Heart left ventricle (tissue), 16 donors: ENCODE measurements at regions of chr9 and their contacts with region 1.

Region 1: GRCh38 chr9:1100945-1101344 is 50.8 kb downstream of the DMRT2 start:
- DNase-seq: peak in 4 of 5 donors; percentile 13 to 70 (median 37)
- ATAC-seq: peak; percentile 47 to 95 (median 86)
- H3K4me3 ChIP-seq: no peak overlapping the region
- H3K27ac ChIP-seq: no peak overlapping the region
- H3K4me1 ChIP-seq: peaks cover 0 to 6% (median 0%) of the 10 kb centered on the region in 12 donors
- H3K27me3 ChIP-seq: peaks cover 0 to 4% (median 0%) of the 10 kb centered on the region in 9 donors
- CTCF ChIP-seq: peak; percentile 39 to 64 (median 54)
- POLR2A ChIP-seq: no peak

Region 2: GRCh38 chr9:1320607-1321195 is 219.8 kb after region 1 on chr9:
- intact Hi-C with region 1: no loop called
- DNase-seq: no peak
- ATAC-seq: peak in 3 of 4 donors; percentile 36 to 77 (median 41)
- H3K4me3 ChIP-seq: no peak overlapping the region
- H3K27ac ChIP-seq: peak overlapping the region in 4 of 12 donors; percentile 24 to 54 (median 32)
- H3K4me1 ChIP-seq: peaks cover 0 to 8% (median 0%) of the 10 kb centered on the region in 12 donors
- H3K27me3 ChIP-seq: peaks cover 0 to 4% (median 0%) of the 10 kb centered on the region in 9 donors
- CTCF ChIP-seq: no peak
- POLR2A ChIP-seq: no peak

Region 3: GRCh38 chr9:1337161-1337560 is 236.2 kb after region 1 on chr9:
- intact Hi-C with region 1: loop called in 1 of 10 experiments (anchors 2 kb)
- DNase-seq: no peak
- ATAC-seq: peak in 1 of 4 donors; percentile 13
- H3K4me3 ChIP-seq: no peak overlapping the region
- H3K27ac ChIP-seq: no peak overlapping the region
- H3K4me1 ChIP-seq: no peaks in the 10 kb centered on the region
- H3K27me3 ChIP-seq: no peaks in the 10 kb centered on the region
- CTCF ChIP-seq: no peak
- POLR2A ChIP-seq: no peak

Region 4: GRCh38 chr9:1429297-1429696 is 328.4 kb after region 1 on chr9:
- intact Hi-C with region 1: loop called in 5 of 10 experiments (anchors 2 to 5 kb)
- DNase-seq: peak in 2 of 5 donors; percentile 28 to 38
- ATAC-seq: peak in 3 of 4 donors; percentile 43 to 60 (median 54)
- H3K4me3 ChIP-seq: no peak overlapping the region
- H3K27ac ChIP-seq: no peak overlapping the region
- H3K4me1 ChIP-seq: no peaks in the 10 kb centered on the region
- H3K27me3 ChIP-seq: peaks cover 0 to 7% (median 0%) of the 10 kb centered on the region in 9 donors
- CTCF ChIP-seq: peak in 10 of 12 donors; percentile 13 to 38 (median 33)
- POLR2A ChIP-seq: no peak

Region 5: DNA sequence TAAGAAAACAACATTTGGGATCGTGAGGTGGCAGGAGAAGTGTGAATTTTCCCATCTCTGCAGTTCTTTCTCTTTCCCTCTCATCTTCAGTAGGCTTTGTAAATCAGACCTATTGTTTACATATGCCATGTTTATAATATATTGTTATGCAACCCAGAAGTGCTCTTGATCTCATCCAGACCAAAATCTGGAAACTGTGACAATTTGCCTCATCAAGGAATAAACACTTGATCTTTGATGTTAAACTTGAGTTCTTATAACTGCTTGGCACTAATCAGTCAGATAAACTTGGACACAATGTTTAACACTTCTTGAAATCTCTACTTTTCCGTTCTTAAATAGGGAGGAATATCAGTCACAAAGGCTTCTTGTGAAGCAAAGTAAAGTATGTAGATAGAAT is 333.9 kb after region 1 on chr9:
- intact Hi-C with region 1: loop called in 1 of 10 experiments (anchors 5 kb)
- DNase-seq: no peak
- ATAC-seq: no peak
- H3K4me3 ChIP-seq: no peak overlapping the region
- H3K27ac ChIP-seq: no peak overlapping the region
- H3K4me1 ChIP-seq: no peaks in the 10 kb centered on the region
- H3K27me3 ChIP-seq: peaks cover 0 to 9% (median 0%) of the 10 kb centered on the region in 9 donors
- CTCF ChIP-seq: no peak
- POLR2A ChIP-seq: no peak

Region 6: GRCh38 chr9:1604942-1605560 is 504.1 kb after region 1 on chr9:
- intact Hi-C with region 1: loop called in 1 of 10 experiments (anchors 10 kb)
- DNase-seq: no peak
- ATAC-seq: no peak
- H3K4me3 ChIP-seq: no peak overlapping the region
- H3K27ac ChIP-seq: no peak overlapping the region
- H3K4me1 ChIP-seq: no peaks in the 10 kb centered on the region
- H3K27me3 ChIP-seq: peaks cover 0 to under 1% (median 0%) of the 10 kb centered on the region in 9 donors
- CTCF ChIP-seq: peak in 10 of 12 donors; percentile 9 to 46 (median 27)
- POLR2A ChIP-seq: no peak